ENCODE measurements at regions of chr2 and their contacts with region 1.

Region 1: DNA sequence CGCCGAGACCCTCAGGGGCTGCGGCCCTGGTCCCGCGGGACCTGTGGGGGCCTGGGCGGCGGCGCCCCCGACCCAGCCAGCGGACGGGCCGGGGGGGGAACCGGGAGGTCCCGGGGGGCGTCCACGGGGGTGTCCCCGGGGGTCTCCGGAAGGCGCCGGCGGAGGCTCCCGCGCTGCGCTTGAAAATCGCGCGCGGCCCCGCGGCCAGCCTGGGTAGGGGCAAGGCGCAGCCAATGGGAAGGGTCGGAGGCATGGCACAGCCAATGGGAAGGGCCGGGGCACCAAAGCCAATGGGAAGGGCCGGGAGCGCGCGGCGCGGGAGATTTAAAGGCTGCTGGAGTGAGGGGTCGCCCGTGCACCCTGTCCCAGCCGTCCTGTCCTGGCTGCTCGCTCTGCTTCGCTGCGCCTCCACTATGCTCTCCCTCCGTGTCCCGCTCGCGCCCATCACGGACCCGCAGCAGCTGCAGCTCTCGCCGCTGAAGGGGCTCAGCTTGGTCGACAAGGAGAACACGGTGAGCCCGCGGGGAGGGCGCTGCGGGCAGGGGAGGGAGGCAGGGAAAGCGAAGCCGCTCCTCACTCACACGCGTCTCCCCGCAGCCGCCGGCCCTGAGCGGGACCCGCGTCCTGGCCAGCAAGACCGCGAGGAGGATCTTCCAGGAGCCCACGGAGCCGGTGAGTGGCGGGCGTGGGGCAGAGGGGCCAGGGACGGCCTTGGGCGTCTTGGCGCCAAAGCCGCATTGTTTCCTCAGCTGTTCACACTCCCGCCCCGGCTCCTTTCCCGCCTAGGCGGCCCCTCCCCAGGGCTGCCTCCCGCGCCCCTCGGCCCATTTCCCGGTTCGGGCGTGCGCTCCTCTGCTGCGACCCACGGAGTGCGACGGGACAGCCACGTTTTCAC is at the start of gene RRM2:
- DNase-seq: peak; percentile 96
- H3K4me3 Mint-ChIP-seq: peak within 1 kb of the TSS; percentile 97
- H3K27ac Mint-ChIP-seq: peak within 1 kb of the TSS; percentile 98
- H3K4me1 Mint-ChIP-seq: peaks cover 67% of the 10 kb centered on the region
- H3K27me3 Mint-ChIP-seq: no peaks in the 10 kb centered on the region
- total RNA-seq, gene RRM2: 546 to 570 TPM

Region 2: DNA sequence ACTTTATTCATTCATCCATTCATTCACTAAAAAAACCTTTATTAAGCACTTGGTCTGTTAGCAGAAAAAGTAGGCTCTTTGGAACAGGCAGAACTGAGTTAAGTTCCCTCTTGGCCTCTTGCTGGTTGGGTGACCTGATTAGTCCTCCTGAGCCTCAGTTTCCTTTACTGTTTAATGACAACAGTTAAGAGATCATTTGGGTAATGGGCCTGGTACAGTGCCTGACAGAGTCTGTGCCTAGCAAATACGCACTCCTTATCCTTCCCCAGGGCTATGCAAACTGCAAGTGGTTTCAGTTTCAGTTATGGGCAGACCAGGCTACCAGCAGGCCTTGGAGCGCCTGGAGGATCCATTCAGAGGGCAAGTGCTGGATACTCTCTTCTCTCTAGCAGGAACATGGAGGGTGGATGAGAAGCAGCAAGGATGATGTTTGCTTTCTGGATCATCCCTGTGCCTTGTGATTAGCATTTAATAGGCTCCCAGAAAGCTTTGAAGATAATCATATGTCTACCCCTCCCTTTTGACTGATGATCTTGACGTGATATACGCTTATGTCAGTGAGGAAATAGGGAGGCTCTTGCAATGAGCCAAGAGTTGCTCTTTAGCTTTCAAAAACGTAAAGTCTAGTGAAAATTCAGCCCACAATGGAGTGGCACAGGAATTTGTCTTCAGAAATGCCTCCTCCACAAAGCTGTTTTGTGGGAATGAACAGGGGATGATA is 291.8 kb before region 1 on chr2:
- CTCF ChIA-PET with region 1: no interaction called
- POLR2A ChIA-PET with region 1: no interaction called
- DNase-seq: peak; percentile 37
- H3K4me3 Mint-ChIP-seq: no peak overlapping the region
- H3K27ac Mint-ChIP-seq: peak overlapping the region; percentile 22
- H3K4me1 Mint-ChIP-seq: peaks cover 38% of the 10 kb centered on the region
- H3K27me3 Mint-ChIP-seq: peaks cover 28% of the 10 kb centered on the region

Region 3: GRCh38 chr2:10072656-10073480 is 49.8 kb before region 1 on chr2:
- CTCF ChIA-PET with region 1: interaction called, 37 read pairs
- POLR2A ChIA-PET with region 1: interaction called, 26 read pairs
- DNase-seq: peak; percentile 84
- H3K4me3 Mint-ChIP-seq: no peak overlapping the region
- H3K27ac Mint-ChIP-seq: no peak overlapping the region
- H3K4me1 Mint-ChIP-seq: peaks cover 7% of the 10 kb centered on the region
- H3K27me3 Mint-ChIP-seq: peaks cover 49% of the 10 kb centered on the region

Region 4: DNA sequence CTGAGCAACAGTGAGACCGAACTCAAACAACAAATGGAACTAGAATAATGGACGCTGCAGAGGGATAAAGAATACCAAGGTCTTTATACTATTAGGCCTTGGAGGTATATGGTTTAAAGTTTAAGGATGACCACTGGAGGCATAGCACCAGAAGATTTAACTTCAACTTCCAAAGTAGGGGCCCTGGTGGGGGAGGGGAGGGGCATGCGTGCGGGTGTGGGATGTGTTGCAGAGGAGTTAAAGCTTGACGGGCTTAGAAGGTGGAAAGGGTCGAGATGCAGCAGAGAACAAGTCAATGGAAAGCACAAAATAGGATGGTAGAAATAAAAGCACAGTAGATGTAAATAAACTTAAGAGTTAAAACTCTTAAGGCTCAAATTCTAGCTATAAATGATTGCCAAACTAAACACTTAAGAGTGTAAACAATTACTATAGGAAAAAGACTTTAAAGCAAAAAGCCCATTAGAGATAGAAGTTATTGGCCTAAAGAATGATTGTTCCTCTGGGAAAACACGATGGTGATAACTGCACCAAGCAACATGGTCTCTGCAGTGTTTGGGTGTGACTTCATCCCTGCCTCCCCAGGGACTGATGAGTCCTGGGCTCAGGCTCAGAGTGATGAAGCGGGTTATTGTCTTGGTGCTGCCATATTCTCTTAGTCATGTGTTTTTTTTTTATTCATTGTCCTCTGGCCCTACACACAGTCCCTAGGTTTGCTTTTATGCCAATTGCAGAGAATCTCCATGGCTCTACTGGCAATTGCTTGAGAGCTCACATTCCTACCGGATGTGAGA is 12.9 kb after region 1 on chr2:
- CTCF ChIA-PET with region 1: interaction called, 6 read pairs
- POLR2A ChIA-PET with region 1: interaction called, 126 read pairs
- DNase-seq: no peak
- H3K4me3 Mint-ChIP-seq: no peak overlapping the region
- H3K27ac Mint-ChIP-seq: peak overlapping the region; percentile 52
- H3K4me1 Mint-ChIP-seq: peaks cover 30% of the 10 kb centered on the region
- H3K27me3 Mint-ChIP-seq: no peaks in the 10 kb centered on the region

Region 5: DNA sequence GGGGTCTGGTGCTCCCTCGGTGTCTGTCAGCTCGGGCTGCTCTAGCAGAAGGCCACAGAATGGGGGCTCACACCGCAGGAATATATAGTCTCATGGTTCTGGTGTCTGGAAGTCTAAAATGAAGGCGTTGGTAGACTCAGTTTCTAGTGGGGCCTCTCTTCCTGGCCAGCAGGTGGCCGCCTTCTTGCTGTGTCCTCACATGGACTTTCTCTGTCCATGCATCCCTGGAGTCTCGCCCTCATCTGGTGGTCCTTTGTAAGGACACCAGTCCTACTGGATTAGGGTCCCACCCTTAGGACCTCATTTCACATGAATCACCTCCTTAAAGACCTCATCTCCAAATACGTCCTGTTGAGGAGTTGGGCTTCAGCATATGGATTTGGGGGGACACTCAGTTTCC is 65.6 kb after region 1 on chr2:
- CTCF ChIA-PET with region 1: no interaction called
- POLR2A ChIA-PET with region 1: no interaction called
- DNase-seq: no peak
- H3K4me3 Mint-ChIP-seq: no peak overlapping the region
- H3K27ac Mint-ChIP-seq: no peak overlapping the region
- H3K4me1 Mint-ChIP-seq: peaks cover 6% of the 10 kb centered on the region
- H3K27me3 Mint-ChIP-seq: no peaks in the 10 kb centered on the region

Region 6: GRCh38 chr2:10302479-10303180 is 180.0 kb after region 1 on chr2 and contains the start of gene HPCAL1:
- CTCF ChIA-PET with region 1: interaction called, 11 read pairs
- POLR2A ChIA-PET with region 1: interaction called, 55 read pairs
- DNase-seq: peak; percentile 86
- H3K4me3 Mint-ChIP-seq: peak within 1 kb of the TSS; percentile 98
- H3K27ac Mint-ChIP-seq: peak within 1 kb of the TSS; percentile 82
- H3K4me1 Mint-ChIP-seq: peaks cover 77% of the 10 kb centered on the region
- H3K27me3 Mint-ChIP-seq: no peaks in the 10 kb centered on the region
- total RNA-seq, gene HPCAL1: 70.0 to 71.4 TPM

Region 7: DNA sequence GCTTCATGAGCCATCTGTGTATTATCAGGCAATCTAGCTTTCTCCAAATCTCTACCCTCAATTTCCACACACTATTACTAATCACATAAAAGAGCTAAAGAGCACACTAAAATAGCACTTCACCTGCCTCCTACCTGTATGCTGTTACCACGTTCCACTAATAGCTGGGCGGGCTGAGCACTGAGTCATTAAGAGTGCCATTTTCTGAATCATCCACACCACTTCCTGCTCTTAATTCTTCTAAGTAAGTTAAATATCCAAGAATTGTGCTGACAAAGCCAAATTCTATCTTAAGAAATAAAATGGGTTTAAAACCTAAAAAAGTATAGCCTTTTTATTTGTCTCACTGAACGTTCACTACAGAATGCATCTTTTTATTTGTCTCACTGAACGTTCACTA is 531.4 kb after region 1 on chr2:
- CTCF ChIA-PET with region 1: no interaction called
- POLR2A ChIA-PET with region 1: interaction called, 11 read pairs
- DNase-seq: peak; percentile 78
- H3K4me3 Mint-ChIP-seq: peak overlapping the region; percentile 0
- H3K27ac Mint-ChIP-seq: peak overlapping the region; percentile 62
- H3K4me1 Mint-ChIP-seq: peaks cover 66% of the 10 kb centered on the region
- H3K27me3 Mint-ChIP-seq: no peaks in the 10 kb centered on the region

Measured in activated CD4-positive, alpha-beta memory T cell treated with anti-CD3 and anti-CD28 coated beads, Interleukin-2, amount 10 ng/mL, durations not matched to agents 7 days and 5 days (primary cell).